Activated CD8-positive, alpha-beta T cell treated with anti-CD3 and anti-CD28 coated beads, Interleukin-2, amount 10 ng/mL, durations not matched to agents 7 days and 5 days (primary cell): ENCODE measurements at regions of chr1 and their contacts with region 1.

Region 1: GRCh38 chr1:117059678-117060440 is at the start of gene TTF2:
- DNase-seq: peak; percentile 99
- ATAC-seq: peak; percentile 94
- H3K4me3 Mint-ChIP-seq: no peak within 1 kb of the TSS
- H3K27ac Mint-ChIP-seq: no peak within 1 kb of the TSS
- H3K4me1 Mint-ChIP-seq: peaks cover 57% of the 10 kb centered on the region
- H3K27me3 Mint-ChIP-seq: no peaks in the 10 kb centered on the region
- total RNA-seq, gene TTF2: 121 to 135 TPM

Region 2: DNA sequence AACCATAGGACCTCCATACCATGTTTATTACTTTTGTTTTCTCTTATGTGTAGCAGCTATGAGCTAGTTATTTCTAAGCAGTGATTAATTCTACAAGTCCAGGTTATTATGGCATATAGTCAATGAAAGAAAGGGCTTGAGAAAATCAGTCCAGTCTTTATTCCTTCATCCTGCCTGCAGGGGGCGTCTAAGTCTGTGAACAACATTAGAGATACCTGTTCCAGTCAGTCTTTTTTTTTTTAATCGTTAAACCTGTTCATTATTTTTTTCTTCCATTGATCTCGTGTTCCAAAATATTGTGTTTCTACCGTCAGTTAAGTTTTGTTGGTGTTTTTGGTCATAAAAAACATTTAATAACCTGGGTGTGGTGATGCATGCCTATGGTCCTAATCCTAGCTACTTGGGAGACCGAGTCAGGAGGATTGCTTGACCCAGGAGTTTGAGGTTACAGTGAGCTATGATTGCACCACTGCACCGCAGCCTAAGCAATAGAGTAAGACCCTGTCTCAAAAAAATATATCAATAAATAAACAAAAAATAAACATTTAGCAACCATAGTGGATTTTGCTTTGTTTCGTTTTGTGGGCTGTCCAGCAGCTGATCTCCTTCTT is 335.0 kb before region 1 on chr1:
- CTCF ChIA-PET with region 1: interaction called, 16 read pairs
- POLR2A ChIA-PET with region 1: interaction called, 5 read pairs
- DNase-seq: peak; percentile 89
- ATAC-seq: peak; percentile 83
- H3K4me3 Mint-ChIP-seq: no peak overlapping the region
- H3K27ac Mint-ChIP-seq: no peak overlapping the region
- H3K4me1 Mint-ChIP-seq: peaks cover 33% of the 10 kb centered on the region
- H3K27me3 Mint-ChIP-seq: no peaks in the 10 kb centered on the region

Region 3: GRCh38 chr1:116763787-116764465 is 295.9 kb before region 1 on chr1:
- CTCF ChIA-PET with region 1: interaction called, 7 read pairs
- POLR2A ChIA-PET with region 1: interaction called, 93 read pairs
- DNase-seq: peak; percentile 74
- ATAC-seq: peak; percentile 21
- H3K4me3 Mint-ChIP-seq: peak overlapping the region; percentile 79
- H3K27ac Mint-ChIP-seq: peak overlapping the region; percentile 99
- H3K4me1 Mint-ChIP-seq: peaks cover 97% of the 10 kb centered on the region
- H3K27me3 Mint-ChIP-seq: no peaks in the 10 kb centered on the region

Region 4: DNA sequence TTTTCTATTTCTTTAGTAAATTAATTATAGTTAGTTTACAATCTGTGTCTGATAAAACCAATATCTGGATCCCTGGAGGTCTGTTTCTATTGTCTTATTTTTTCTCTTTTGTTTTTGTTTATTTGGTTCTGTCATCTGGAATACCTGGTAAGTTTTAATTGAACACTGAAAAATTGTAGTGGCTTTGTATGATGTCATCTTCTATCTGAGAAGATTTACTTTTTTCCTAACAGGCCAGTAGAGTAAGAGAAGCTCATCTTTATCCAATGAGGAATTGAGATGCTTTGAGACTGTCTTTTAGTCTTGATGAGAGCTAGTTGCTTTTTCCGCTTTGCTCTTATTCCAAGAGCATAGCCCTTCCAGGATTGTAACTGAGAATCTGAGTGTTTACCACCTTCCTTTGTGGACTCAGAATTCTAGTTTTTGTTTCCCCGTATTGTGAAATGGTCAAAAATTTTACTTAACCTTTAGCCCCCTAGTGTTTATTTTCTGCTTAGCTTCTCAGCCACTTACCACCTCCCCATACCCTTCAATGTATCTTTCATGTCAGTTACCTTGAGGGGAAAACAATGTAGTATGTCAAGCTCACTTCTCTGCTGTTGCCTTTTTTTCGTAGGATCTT is 125.2 kb before region 1 on chr1:
- CTCF ChIA-PET with region 1: interaction called, 16 read pairs
- POLR2A ChIA-PET with region 1: interaction called, 6 read pairs
- DNase-seq: peak; percentile 27
- ATAC-seq: peak; percentile 73
- H3K4me3 Mint-ChIP-seq: no peak overlapping the region
- H3K27ac Mint-ChIP-seq: peak overlapping the region; percentile 72
- H3K4me1 Mint-ChIP-seq: peaks cover 26% of the 10 kb centered on the region
- H3K27me3 Mint-ChIP-seq: peaks cover 2% of the 10 kb centered on the region

Region 5: DNA sequence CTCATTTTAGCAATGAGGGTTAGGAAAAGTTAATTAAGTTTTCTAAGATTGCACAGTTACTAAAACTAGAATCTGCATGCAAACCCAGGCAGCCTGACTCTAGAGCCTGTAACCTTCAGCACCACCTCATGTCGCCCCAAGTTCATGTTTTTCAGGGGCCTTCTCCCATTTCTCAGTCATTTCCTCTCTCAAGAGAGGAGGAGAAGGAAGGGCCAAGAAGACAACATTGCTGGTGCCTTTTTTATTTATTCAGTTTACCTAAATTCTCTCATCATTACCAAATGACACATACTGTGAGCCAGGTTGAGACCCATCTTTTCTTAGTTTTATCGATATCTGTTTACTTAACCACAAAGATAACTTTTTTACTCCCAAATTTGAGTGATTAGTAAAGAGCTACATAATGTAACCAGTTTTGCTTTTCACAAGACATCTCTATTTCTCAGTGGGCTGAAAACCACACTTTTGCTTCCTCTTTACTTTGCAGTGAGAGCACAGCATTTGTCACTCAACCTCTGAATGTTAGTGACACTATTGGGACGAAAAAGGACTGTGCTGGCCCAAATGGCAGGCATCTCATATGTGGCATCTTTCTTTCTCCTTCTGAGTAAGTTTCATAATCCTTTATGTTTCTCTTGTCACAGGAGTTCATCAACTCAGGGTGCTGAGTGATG is 58.5 kb before region 1 on chr1 and contains the start of gene CD101:
- CTCF ChIA-PET with region 1: no interaction called
- POLR2A ChIA-PET with region 1: interaction called, 13 read pairs
- DNase-seq: peak; percentile 51
- ATAC-seq: peak; percentile 81
- H3K4me3 Mint-ChIP-seq: peak within 1 kb of the TSS; percentile 70
- H3K27ac Mint-ChIP-seq: peak within 1 kb of the TSS; percentile 91
- H3K4me1 Mint-ChIP-seq: peaks cover 60% of the 10 kb centered on the region
- H3K27me3 Mint-ChIP-seq: no peaks in the 10 kb centered on the region
- total RNA-seq, gene CD101: 28.6 to 34.4 TPM

Region 6: DNA sequence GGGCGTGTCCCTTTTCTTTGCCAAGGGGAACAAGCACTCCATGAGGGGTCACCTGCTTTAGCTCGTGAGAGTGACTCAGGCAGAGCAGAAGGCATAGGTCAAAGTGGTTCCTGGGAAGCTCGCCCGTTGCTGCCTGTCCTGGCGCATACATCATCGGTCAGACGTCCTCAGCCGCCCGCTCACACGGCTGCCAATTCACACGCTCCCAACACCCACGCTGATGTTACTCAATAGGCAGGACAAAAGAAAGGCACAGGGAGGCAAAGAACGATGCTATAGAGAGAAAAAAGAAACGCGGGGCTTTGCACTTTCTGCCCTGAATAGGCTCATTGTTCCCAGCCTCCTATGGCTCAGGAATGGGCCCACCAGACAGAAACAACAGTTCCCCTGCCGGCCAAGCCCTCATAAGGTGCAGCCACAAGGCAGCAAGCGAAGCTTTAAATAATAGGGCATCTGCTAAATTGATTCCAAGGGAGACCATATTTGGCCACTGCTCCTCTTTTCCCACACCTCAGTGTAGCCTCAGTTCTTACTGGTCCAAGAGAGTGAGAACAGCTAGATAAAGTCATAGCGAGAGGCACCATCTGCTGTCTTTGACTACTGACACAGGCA is 112.1 kb after region 1 on chr1:
- CTCF ChIA-PET with region 1: no interaction called
- POLR2A ChIA-PET with region 1: no interaction called
- DNase-seq: no peak
- ATAC-seq: no peak
- H3K4me3 Mint-ChIP-seq: no peak overlapping the region
- H3K27ac Mint-ChIP-seq: no peak overlapping the region
- H3K4me1 Mint-ChIP-seq: no peaks in the 10 kb centered on the region
- H3K27me3 Mint-ChIP-seq: peaks cover 6% of the 10 kb centered on the region